ENCODE measurements at regions of chr4 and their contacts with region 1.

Region 1: GRCh38 chr4:125314676-125315575 is at the start of gene FAT4:
- DNase-seq: peak; percentile 98
- H3K4me3 ChIP-seq: peak within 1 kb of the TSS; percentile 87 to 97 (median 90)
- H3K27ac ChIP-seq: peak within 1 kb of the TSS; percentile 93 to 99 (median 94)
- H3K4me1 ChIP-seq: peaks cover 0 to 44% (median 26%) of the 10 kb centered on the region in 4 donors
- H3K27me3 ChIP-seq: no peaks in the 10 kb centered on the region
- CTCF ChIP-seq: no peak
- EP300 ChIP-seq: no peak
- POLR2A ChIP-seq: peak; percentile 41 to 75
- total RNA-seq, gene FAT4: 46.2 to 74.2 (median 61.4) TPM

Region 2: DNA sequence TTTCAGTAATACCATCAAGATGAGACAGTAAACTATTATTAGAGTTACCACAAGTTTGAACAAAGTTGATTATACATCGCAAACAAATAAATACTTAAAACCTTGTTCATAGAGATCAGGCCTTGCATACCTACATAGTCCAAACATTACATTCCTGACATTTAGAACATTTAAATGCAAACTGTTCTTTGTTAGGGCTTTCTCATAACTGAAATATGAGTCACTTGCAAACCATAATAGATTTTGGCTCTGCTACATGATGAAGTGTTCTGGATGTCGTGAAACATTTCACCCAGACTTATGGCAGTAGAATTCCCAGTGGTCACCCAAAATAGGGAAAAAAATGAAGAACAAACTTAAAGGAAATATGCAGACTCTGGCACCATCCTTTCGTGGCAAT is 74.8 kb after region 1 on chr4:
- intact Hi-C with region 1: loop called (anchors 5 kb)
- DNase-seq: no peak
- H3K4me3 ChIP-seq: no peak overlapping the region
- H3K27ac ChIP-seq: peak overlapping the region; percentile 74 to 86 (median 82)
- H3K4me1 ChIP-seq: peaks cover 0 to 55% (median 41%) of the 10 kb centered on the region in 4 donors
- H3K27me3 ChIP-seq: no peaks in the 10 kb centered on the region
- CTCF ChIP-seq: no peak
- EP300 ChIP-seq: no peak
- POLR2A ChIP-seq: no peak

Region 3: DNA sequence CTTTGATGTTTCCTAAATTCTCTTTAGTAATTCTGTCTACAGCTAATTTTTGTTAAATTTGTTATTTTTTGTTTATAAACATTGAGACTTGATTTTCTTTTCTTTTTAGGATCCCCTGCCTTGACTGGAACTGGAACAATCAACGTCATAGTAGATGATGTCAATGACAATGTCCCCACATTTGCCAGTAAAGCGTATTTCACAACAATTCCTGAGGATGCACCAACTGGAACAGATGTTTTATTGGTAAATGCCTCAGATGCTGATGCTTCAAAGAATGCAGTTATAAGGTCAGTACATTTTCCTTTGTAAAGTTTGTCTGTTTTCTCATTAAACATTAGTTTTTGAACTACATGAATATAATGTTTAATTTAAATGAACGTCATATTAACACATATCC is 119.2 kb after region 1 on chr4:
- intact Hi-C with region 1: no loop called
- DNase-seq: no peak
- H3K4me3 ChIP-seq: no peak overlapping the region
- H3K27ac ChIP-seq: peak overlapping the region in 1 of 4 donors; percentile 27
- H3K4me1 ChIP-seq: no peaks in the 10 kb centered on the region
- H3K27me3 ChIP-seq: no peaks in the 10 kb centered on the region
- CTCF ChIP-seq: no peak
- EP300 ChIP-seq: no peak
- POLR2A ChIP-seq: no peak

Region 4: DNA sequence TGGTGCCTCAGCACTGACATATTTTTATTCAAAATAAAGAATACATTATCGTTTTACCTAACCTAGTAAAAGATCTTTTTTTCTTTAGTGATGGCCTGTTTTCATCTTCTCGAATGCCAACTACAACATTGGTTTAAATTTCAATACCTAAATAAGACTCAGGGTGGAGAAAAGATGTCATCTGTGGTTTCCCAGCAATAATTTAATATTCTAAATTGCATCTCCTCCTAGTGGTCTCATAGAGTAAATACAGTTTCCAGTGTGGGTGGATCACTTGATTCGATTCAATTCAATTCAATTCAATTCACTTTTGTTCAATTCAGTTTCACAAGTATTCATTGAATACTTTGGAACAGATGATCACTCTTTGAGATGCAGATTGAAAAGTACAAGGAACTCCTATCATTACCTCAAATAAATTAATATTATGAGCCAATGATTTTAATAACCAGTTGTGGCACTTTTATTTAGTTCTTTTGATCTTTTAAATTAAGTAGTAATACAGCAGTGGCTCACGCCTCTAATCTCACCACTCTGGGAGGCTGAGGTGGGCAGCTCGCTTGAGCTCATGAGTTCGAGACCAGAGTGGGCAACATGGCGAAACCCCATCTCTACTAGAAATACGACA is 427.0 kb after region 1 on chr4:
- intact Hi-C with region 1: loop called (anchors 5 kb)
- DNase-seq: no peak
- H3K4me3 ChIP-seq: no peak overlapping the region
- H3K27ac ChIP-seq: no peak overlapping the region
- H3K4me1 ChIP-seq: peaks cover 0 to 6% (median 0%) of the 10 kb centered on the region in 4 donors
- H3K27me3 ChIP-seq: no peaks in the 10 kb centered on the region
- CTCF ChIP-seq: peak; percentile 8 to 64 (median 37)
- EP300 ChIP-seq: no peak
- POLR2A ChIP-seq: no peak

Region 5: DNA sequence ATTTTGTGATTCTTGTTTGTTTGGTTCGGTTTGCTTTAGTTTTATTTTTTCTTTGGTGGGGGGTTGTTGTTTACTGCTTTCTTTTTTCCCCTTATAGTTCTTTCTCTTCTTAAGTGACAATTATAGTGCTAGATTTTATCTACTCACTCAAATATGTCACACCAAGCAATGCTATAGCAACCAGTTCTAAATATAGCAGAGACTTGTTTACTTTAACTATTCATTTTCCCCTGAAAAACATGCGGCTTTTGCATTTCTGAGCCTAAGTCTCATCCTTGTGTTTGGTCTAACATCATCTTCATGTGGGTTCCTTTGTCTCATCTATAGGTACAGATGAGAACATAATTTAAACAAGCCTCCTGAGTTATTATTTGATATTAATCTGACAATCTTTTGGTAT is 676.5 kb after region 1 on chr4:
- intact Hi-C with region 1: loop called (anchors 10 kb)
- DNase-seq: no peak
- H3K4me3 ChIP-seq: no peak overlapping the region
- H3K27ac ChIP-seq: no peak overlapping the region
- H3K4me1 ChIP-seq: peaks cover 0 to 53% (median 22%) of the 10 kb centered on the region in 4 donors
- H3K27me3 ChIP-seq: no peaks in the 10 kb centered on the region
- CTCF ChIP-seq: no peak
- EP300 ChIP-seq: no peak
- POLR2A ChIP-seq: no peak

Region 6: DNA sequence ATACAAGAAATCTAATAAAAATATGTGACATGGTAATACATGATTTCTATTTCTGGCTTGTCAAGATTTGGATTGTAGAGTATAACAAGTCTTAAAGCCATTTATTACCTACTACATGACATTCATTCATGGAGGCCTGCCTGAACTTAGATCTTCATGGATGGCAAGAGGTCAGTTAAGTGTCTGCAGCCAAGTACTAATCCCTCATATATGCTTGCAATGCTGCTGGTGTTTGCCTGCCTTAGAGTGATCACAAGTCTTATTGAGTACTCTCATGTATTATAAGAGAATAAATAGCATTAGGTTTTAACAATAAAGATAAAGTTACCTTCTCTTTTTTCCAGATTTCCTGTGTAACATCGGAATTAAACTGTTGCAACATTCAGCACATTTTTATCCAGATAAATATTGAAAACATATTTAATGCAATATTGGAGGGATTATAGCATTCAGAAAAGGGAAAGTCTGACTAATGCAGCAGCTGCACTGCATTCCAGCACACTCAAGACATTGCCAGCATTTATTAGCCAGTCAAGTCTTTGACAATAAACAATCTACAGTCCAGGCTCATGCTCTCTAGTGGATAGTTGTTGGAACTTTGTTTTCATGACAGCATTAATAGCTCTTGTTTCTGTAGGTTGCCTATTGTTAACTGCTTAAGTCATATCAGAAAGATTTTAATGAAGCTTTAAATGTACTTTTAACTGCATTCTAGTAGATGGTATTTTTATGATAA is 736.9 kb after region 1 on chr4:
- intact Hi-C with region 1: loop called (anchors 5 kb)
- DNase-seq: no peak
- H3K4me3 ChIP-seq: no peak overlapping the region
- H3K27ac ChIP-seq: peak overlapping the region in 3 of 4 donors; percentile 0 to 22 (median 21)
- H3K4me1 ChIP-seq: peaks cover 0 to 17% (median 13%) of the 10 kb centered on the region in 4 donors
- H3K27me3 ChIP-seq: no peaks in the 10 kb centered on the region
- CTCF ChIP-seq: peak in 2 of 4 experiments; percentile 12 to 22
- EP300 ChIP-seq: no peak
- POLR2A ChIP-seq: no peak

Region 7: GRCh38 chr4:126604268-126604867 is 1289.4 kb after region 1 on chr4:
- intact Hi-C with region 1: loop called (anchors 5 kb)
- DNase-seq: no peak
- H3K4me3 ChIP-seq: no peak overlapping the region
- H3K27ac ChIP-seq: no peak overlapping the region
- H3K4me1 ChIP-seq: no peaks in the 10 kb centered on the region
- H3K27me3 ChIP-seq: no peaks in the 10 kb centered on the region
- CTCF ChIP-seq: peak in 3 of 4 experiments; percentile 33 to 64 (median 41)
- EP300 ChIP-seq: no peak
- POLR2A ChIP-seq: no peak

Measured in sigmoid colon (tissue), 7 donors.